ENCODE measurements at regions of chr17 and their contacts with region 1.

Region 1: DNA sequence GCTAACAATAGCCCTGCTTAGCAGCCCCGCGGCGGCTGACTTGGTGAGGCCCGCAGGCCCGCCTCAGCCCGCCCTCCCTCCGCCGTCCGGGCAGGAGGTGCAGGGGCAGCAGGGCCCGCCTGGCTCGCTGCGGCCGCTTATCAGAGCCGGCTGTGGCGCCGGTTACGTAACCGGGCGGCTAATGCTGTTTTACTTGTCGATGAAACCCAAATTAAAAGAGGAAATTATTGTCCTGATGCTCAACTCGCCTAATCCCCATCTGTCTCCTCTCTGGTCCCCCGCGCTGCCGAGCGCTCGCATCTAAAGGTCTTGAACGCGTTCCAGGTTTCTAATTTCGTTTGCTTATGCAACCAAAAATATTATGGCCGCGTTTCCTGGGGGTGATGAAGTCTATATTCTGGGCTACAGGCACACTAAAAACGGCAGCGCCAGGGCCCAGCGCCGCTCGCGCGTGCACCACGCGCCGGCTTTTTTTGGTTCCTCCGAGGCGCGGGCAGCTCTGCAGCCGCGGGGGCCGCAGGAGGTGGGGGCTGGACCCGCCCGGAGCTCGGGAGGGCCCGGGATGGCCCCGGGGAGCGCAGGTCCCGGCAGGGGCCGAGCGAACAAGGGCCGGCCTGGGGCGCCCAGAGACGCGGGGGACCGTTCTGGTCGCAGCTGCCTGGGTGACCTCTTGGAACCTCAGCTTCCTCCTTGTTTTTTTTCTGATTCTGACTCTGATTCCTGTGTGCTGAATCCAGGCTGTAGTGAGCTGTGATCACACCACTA is 65.2 kb upstream of the TOB1 start:
- DNase-seq: peak; percentile 74
- ATAC-seq: peak; percentile 91
- H3K4me3 Mint-ChIP-seq: peak overlapping the region; percentile 75
- H3K27ac Mint-ChIP-seq: no peak overlapping the region
- H3K4me1 Mint-ChIP-seq: peaks cover 18% of the 10 kb centered on the region
- H3K27me3 Mint-ChIP-seq: peaks cover 28% of the 10 kb centered on the region
- CTCF ChIP-seq: no peak

Region 2: GRCh38 chr17:50911890-50912289 is 19.4 kb before region 1 on chr17:
- CTCF ChIA-PET with region 1: interaction called, 15 read pairs
- POLR2A ChIA-PET with region 1: interaction called, 6 read pairs
- DNase-seq: no peak
- ATAC-seq: peak; percentile 75
- H3K4me3 Mint-ChIP-seq: no peak overlapping the region
- H3K27ac Mint-ChIP-seq: no peak overlapping the region; the same call in 1 of the 2 replicates
- H3K4me1 Mint-ChIP-seq: peaks cover 56% of the 10 kb centered on the region
- H3K27me3 Mint-ChIP-seq: no peaks in the 10 kb centered on the region
- CTCF ChIP-seq: no peak

Region 3: DNA sequence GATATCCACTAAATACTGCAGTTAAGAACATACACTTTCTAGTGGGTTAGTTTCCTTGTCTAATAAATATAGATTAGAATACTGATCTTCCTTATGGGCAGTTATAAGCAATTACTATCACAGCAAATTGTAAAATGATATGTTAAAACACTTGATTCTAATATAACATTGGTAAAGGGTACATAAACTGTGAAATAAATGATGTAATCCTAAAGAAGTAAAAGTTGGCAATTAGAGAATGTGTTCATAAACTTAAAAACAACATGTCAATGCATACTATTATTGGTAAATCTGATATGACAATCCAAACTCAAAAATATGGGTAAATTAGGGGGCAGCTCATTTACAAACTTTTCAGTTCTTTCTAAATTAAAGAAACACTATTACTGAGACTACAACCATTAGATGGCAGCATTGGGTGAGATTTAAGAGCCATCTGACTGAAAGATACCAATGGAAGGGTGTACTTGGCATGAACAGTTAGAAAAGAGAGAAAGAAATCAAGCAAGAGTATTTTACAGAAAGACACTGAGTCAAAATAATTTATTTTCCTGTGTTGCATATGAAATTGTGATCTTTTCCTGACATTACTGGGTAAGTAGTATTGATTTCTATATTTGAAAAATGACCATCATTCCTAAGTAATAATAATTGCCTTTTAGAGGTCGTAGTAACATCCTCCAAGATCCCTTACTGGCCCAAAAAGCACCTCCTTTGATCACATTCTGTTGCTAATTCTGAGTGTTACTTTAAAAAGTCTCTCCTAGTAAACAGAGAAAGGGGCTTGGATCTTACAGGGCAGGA is 69.7 kb after region 1 on chr17:
- CTCF ChIA-PET with region 1: no interaction called
- POLR2A ChIA-PET with region 1: no interaction called
- DNase-seq: no peak
- ATAC-seq: peak; percentile 59
- H3K4me3 Mint-ChIP-seq: no peak overlapping the region
- H3K27ac Mint-ChIP-seq: no peak overlapping the region
- H3K4me1 Mint-ChIP-seq: no peaks in the 10 kb centered on the region
- H3K27me3 Mint-ChIP-seq: no peaks in the 10 kb centered on the region
- CTCF ChIP-seq: no peak